ENCODE measurements at regions of chr7 and their contacts with region 1.

Region 1: GRCh38 chr7:10429511-10429910 is 544.2 kb upstream of the PHF14 start:
- DNase-seq: no peak
- ATAC-seq: no peak
- H3K4me3 ChIP-seq: no peak overlapping the region
- H3K27ac ChIP-seq: no peak overlapping the region
- H3K4me1 ChIP-seq: no peaks in the 10 kb centered on the region
- H3K27me3 ChIP-seq: no peaks in the 10 kb centered on the region
- CTCF ChIP-seq: no peak
- EP300 ChIP-seq: no peak
- POLR2A ChIP-seq: no peak
- RAD21 ChIP-seq: no peak

Region 2: DNA sequence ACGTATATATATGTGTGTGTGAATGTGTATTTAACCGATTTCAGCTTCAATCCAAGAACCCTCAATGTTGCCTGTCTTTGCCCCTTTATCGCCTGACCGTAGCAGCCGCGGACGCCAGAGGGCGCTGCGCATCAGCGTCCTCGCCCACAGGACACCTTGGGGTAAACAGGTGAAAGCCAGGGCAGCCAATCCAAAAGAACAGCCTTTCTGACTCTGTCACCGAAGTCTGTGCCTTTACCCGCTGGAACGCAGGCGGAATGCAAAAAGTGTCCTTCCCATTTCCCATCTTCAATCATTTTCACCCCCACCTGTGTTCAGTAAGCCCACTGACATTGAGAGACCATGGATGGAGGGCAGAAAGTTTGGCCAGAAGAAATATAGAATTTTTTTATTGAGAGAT is 1992.5 kb before region 1 on chr7:
- CTCF ChIA-PET with region 1: no interaction called
- POLR2A ChIA-PET with region 1: no interaction called
- in situ Hi-C with region 1: no loop called
- intact Hi-C with region 1: loop called (anchors 5 kb)
- DNase-seq: peak; percentile 23
- ATAC-seq: peak; percentile 71
- H3K4me3 ChIP-seq: no peak overlapping the region
- H3K27ac ChIP-seq: no peak overlapping the region
- H3K4me1 ChIP-seq: peaks cover 25% of the 10 kb centered on the region
- H3K27me3 ChIP-seq: peaks cover 0 to 33% of the 10 kb centered on the region in 2 experiments; a peak in 3 of 5 replicates
- CTCF ChIP-seq: peak; percentile 89
- EP300 ChIP-seq: no peak
- POLR2A ChIP-seq: no peak
- RAD21 ChIP-seq: peak; percentile 46; the same call in 1 of the 2 replicates

Region 3: GRCh38 chr7:10257438-10257837 is 172.1 kb before region 1 on chr7:
- CTCF ChIA-PET with region 1: no interaction called
- POLR2A ChIA-PET with region 1: no interaction called
- in situ Hi-C with region 1: no loop called
- intact Hi-C with region 1: no loop called
- DNase-seq: no peak
- ATAC-seq: no peak
- H3K4me3 ChIP-seq: no peak overlapping the region
- H3K27ac ChIP-seq: no peak overlapping the region
- H3K4me1 ChIP-seq: no peaks in the 10 kb centered on the region
- H3K27me3 ChIP-seq: no peaks in the 10 kb centered on the region
- CTCF ChIP-seq: no peak
- EP300 ChIP-seq: no peak
- POLR2A ChIP-seq: no peak
- RAD21 ChIP-seq: no peak

Region 4: DNA sequence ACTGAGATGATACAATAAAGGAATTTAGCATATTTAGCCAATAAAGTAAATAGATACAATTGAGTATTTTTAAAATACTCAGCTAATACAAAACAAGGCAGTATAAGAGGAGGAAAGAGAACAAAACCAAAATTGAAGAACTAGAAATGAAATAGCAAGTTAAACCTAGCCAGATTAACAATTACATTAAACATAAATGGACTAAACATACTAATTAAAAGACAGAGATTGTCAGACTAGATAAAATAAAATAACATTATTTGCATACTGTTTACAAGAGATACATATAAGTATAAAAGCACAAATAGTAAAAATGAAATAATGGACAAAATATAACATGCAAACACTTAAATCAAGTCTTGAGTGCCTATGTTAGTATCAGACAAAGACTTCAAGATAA is 26.4 kb after region 1 on chr7:
- CTCF ChIA-PET with region 1: no interaction called
- POLR2A ChIA-PET with region 1: no interaction called
- in situ Hi-C with region 1: no loop called
- intact Hi-C with region 1: no loop called
- DNase-seq: no peak
- ATAC-seq: no peak
- H3K4me3 ChIP-seq: no peak overlapping the region
- H3K27ac ChIP-seq: no peak overlapping the region
- H3K4me1 ChIP-seq: no peaks in the 10 kb centered on the region
- H3K27me3 ChIP-seq: no peaks in the 10 kb centered on the region
- CTCF ChIP-seq: no peak
- EP300 ChIP-seq: no peak
- POLR2A ChIP-seq: no peak
- RAD21 ChIP-seq: no peak

Measured in HepG2 (cell line).